Activated T-helper 1 cell treated with anti-CD3 and anti-CD28 coated beads, Interleukin-12 subunit alpha, Interleukin-12 subunit beta, Interleukin-2, Interleukin-4 antibody, amounts not matched to agents 30 ng/mL and 10 ng/mL and 1 ng/mL, durations not matched to agents 14 hours and 24 hours and 36 hours (primary cell): ENCODE measurements at regions of chr5 and their contacts with region 1.

Region 1: GRCh38 chr5:76544268-76544926 is 78.8 kb downstream of the F2RL2 start:
- DNase-seq: peak; percentile 41
- H3K4me3 Mint-ChIP-seq: peak overlapping the region; percentile 79
- H3K27ac Mint-ChIP-seq: peak overlapping the region; percentile 98
- H3K4me1 Mint-ChIP-seq: peaks cover 93% of the 10 kb centered on the region
- H3K27me3 Mint-ChIP-seq: no peaks in the 10 kb centered on the region

Region 2: DNA sequence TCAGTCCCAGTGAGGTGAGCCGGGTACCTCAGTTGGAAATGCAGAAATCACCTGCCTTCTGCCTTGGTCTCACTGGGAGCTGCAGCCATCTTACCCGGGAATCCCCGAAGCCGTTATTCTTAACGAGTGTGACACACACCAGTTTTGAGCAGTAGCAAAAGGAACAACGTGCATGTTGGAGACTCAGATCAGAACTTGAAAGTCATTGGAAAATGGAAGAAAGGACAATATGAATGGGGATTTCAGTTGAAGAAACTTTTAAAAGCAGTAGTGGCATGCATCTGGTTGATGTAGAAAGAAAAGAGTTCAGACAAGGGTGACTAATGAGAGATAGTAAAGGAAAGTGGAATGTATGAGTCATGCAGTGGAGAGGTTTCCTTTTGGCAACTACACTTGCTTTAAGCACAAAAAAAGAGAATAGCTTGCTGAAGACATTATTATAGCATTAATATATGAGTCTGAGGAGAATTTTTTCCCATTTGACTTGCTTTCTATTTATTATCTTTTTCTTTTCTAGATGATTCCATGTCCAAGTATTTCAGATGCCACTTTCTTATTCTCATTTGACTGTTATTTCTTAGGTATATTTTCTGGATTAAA is 977.6 kb before region 1 on chr5:
- intact Hi-C with region 1: loop called (anchors 5 kb)
- DNase-seq: peak; percentile 39
- H3K4me3 Mint-ChIP-seq: peak overlapping the region; percentile 29
- H3K27ac Mint-ChIP-seq: peak overlapping the region; percentile 81
- H3K4me1 Mint-ChIP-seq: peaks cover 53% of the 10 kb centered on the region
- H3K27me3 Mint-ChIP-seq: no peaks in the 10 kb centered on the region

Region 3: DNA sequence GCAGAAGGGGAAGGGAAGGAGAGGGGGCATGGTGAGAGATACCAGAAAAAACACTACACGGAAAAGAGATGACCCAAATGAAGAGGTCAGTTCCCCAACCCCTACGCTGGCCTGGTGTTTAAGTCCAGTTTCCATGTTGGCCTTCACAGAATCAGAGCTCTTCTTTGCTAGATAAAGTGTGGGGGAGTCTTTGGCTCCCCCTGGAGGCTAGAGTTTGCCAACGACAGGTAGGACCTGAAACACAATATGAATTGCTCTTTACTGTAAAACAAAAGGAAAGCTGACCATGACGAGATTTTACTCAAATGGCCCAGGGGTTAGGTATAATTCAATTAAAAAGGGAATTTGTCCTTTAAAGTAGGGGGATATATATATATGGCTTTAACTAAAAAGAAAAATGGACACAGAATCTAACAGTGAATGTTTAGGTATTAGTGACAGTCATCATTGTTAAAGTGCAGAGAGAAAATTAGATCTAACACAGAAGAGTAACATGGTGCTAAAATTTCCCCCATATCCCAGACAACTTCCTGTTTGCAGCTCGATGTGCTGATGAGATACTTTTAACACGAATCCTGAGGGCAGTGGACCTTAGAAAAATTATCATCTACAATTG is 369.2 kb before region 1 on chr5:
- intact Hi-C with region 1: loop called (anchors 5 kb)
- DNase-seq: peak; percentile 27
- H3K4me3 Mint-ChIP-seq: no peak overlapping the region
- H3K27ac Mint-ChIP-seq: no peak overlapping the region
- H3K4me1 Mint-ChIP-seq: peaks cover 22% of the 10 kb centered on the region
- H3K27me3 Mint-ChIP-seq: peaks cover 6% of the 10 kb centered on the region

Region 4: GRCh38 chr5:76337953-76338451 is 206.4 kb before region 1 on chr5:
- intact Hi-C with region 1: loop called (anchors 1 kb)
- DNase-seq: peak; percentile 36
- H3K4me3 Mint-ChIP-seq: no peak overlapping the region
- H3K27ac Mint-ChIP-seq: no peak overlapping the region
- H3K4me1 Mint-ChIP-seq: peaks cover 28% of the 10 kb centered on the region
- H3K27me3 Mint-ChIP-seq: no peaks in the 10 kb centered on the region

Region 5: DNA sequence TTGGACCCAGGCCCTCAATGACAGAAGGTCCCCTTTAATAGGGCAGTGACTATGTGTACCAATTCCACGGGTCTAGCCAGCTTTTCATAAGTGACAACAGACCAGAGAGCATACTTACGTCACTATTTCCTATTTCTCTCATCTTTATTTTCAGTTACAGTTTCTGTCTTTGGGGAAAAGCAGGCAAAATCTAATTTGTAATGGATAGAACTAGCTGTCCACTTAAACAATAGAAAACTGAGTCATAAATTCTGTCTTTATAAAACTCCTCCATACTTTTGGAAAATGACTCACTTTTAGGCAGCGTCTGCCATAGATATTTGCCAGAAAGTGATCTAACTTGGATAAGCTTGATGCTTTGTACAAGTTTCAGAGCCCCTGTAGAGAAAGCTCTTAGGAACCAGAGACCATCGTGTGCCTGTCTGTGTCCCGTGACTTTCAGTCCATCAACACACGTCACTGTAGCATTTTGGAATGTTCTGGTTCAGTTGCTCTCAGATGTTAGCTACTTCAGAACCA is 23.1 kb before region 1 on chr5:
- intact Hi-C with region 1: loop called (anchors 1 kb)
- DNase-seq: no peak
- H3K4me3 Mint-ChIP-seq: peak overlapping the region; percentile 63
- H3K27ac Mint-ChIP-seq: peak overlapping the region; percentile 91
- H3K4me1 Mint-ChIP-seq: peaks cover 58% of the 10 kb centered on the region
- H3K27me3 Mint-ChIP-seq: no peaks in the 10 kb centered on the region

Region 6: DNA sequence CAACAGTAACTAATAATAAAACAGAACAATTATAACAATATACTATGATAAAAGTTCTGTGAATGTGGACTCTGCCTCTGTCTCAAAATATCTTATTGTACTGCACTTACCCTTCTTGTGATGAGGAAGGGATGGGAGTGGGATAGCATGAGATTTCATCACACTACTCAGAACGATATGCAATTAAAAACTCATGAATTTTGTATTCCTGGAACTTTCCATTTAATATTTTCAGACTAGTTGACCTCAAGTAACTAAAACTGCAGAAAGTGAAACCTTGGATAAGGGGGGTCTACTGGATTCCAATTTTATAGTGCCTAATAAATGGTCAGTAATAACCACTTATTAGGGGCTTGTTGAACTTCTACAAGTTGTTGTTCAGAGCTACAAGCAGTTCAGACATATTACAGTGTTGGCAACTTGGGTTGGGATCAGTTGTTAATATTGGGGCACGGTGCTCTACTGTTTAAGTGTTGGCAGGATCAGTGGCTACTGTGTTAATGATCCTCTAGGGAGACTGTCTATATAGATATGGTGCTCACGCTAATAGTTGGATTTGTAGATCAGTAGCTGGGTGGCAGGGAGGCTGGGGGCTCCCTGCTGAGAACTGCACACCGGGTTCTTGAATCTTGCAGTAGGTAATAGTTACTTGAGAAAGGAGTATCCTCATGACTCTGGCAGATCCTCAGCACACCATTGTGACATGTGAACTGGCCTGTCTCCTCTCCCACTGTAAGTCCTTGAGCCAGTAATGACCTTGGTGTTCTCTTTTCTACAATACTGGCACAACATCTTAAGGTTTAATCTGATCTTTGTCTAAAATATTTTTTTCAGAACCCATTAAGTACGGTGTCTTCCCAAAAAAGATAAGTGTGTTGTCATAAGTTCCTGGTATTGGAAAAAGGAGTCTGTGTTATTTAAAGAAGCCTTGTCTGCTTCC is 16.8 kb after region 1 on chr5:
- intact Hi-C with region 1: no loop called
- DNase-seq: no peak
- H3K4me3 Mint-ChIP-seq: no peak overlapping the region
- H3K27ac Mint-ChIP-seq: no peak overlapping the region
- H3K4me1 Mint-ChIP-seq: peaks cover 30% of the 10 kb centered on the region
- H3K27me3 Mint-ChIP-seq: no peaks in the 10 kb centered on the region

Region 7: DNA sequence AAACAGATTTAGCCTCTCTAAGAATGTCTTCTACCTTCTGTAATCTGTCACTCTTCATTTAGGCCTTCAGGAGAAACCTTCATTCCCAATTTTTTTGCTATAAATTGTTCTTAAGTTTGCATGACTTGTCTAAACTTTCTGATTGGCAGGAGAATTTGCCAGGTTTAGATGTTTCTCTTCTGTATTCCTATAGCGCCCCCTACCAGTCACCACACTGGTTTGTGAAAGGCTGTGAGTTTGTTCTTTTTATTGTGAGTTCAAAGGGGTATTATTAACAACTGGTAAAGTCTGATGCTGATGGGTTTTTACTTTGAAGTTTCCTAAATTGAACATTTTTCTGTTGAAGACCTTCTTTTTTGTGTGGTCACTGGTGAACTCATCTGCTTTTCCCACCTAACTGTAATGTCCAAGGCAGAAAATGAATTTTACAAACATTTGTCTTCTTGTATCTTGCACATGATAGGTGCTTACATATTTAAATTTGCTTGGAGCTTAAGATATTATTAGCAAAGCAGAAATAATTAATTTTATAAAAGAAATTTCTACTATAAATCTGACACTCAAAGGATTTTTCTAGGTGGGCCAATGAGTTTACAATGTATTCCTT is 97.2 kb after region 1 on chr5:
- intact Hi-C with region 1: loop called (anchors 2 kb)
- DNase-seq: peak; percentile 41
- H3K4me3 Mint-ChIP-seq: no peak overlapping the region
- H3K27ac Mint-ChIP-seq: no peak overlapping the region
- H3K4me1 Mint-ChIP-seq: peaks cover 22% of the 10 kb centered on the region
- H3K27me3 Mint-ChIP-seq: no peaks in the 10 kb centered on the region

Region 8: GRCh38 chr5:76736679-76737556 is 192.5 kb after region 1 on chr5:
- intact Hi-C with region 1: loop called (anchors 2 kb)
- DNase-seq: no peak
- H3K4me3 Mint-ChIP-seq: no peak overlapping the region
- H3K27ac Mint-ChIP-seq: peak overlapping the region; percentile 57
- H3K4me1 Mint-ChIP-seq: peaks cover 63% of the 10 kb centered on the region
- H3K27me3 Mint-ChIP-seq: no peaks in the 10 kb centered on the region